ENCODE measurements at regions of chr17 and their contacts with region 1.

Region 1: DNA sequence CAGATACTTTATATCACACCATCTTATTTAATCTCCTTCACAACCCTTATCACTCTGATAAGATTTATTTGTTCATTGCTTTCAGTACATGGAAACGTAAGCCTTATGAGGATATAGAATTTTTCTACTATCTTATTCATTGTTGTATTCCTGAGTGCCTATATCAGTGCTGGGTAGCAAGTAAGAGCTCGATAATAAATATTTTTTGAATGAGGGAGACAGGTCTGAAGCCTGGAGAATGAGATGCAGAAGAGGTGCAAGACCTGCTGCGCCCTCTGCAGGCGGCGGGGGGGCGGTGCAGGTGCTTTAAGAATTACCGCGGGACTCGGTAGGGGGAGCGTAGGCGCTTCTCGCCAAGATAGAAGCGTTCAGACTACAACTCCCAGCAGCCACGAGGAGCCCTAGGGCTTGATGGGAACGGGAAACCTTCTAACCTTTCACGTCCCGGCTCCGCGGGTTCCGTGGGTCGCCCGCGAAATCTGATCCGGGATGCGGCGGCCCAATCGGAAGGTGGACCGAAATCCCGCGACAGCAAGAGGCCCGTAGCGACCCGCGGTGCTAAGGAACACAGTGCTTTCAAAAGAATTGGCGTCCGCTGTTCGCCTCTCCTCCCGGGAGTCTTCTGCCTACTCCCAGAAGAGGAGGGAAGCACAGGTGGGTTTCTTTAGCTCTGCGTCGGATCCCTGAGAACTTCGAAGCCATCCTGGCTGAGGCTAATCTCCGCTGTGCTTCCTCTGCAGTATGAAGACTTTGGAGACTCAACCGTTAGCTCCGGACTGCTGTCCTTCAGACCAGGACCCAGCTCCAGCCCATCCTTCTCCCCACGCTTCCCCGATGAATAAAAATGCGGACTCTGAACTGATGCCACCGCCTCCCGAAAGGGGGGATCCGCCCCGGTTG is at the start of gene WRAP53:
- DNase-seq: peak; percentile 91
- H3K4me3 Mint-ChIP-seq: peak within 1 kb of the TSS; percentile 86
- H3K27ac Mint-ChIP-seq: peak within 1 kb of the TSS; percentile 99
- H3K4me1 Mint-ChIP-seq: no peaks in the 10 kb centered on the region
- H3K27me3 Mint-ChIP-seq: no peaks in the 10 kb centered on the region
- CTCF ChIP-seq: peak; percentile 89
- total RNA-seq, gene WRAP53: 10.1 and 12.9 TPM in 2 replicates

Region 2: GRCh38 chr17:7351665-7352501 is 336.3 kb before region 1 on chr17 and contains the start of gene KCTD11:
- CTCF ChIA-PET with region 1: no interaction called
- intact Hi-C with region 1: loop called (anchors 10 kb)
- DNase-seq: peak; percentile 94
- H3K4me3 Mint-ChIP-seq: peak within 1 kb of the TSS; percentile 93
- H3K27ac Mint-ChIP-seq: peak within 1 kb of the TSS; percentile 95
- H3K4me1 Mint-ChIP-seq: peaks cover 28% of the 10 kb centered on the region
- H3K27me3 Mint-ChIP-seq: peaks cover 20% of the 10 kb centered on the region
- CTCF ChIP-seq: no peak
- total RNA-seq, gene KCTD11: 8.5 and 9.9 TPM in 2 replicates

Region 3: GRCh38 chr17:7484919-7485377 is 203.2 kb before region 1 on chr17:
- CTCF ChIA-PET with region 1: no interaction called
- intact Hi-C with region 1: loop called (anchors 5 kb)
- DNase-seq: no peak
- H3K4me3 Mint-ChIP-seq: peak overlapping the region; percentile 93
- H3K27ac Mint-ChIP-seq: peak overlapping the region; percentile 96
- H3K4me1 Mint-ChIP-seq: peaks cover 42% of the 10 kb centered on the region
- H3K27me3 Mint-ChIP-seq: no peaks in the 10 kb centered on the region
- CTCF ChIP-seq: no peak

Region 4: GRCh38 chr17:7583253-7584109 is 104.7 kb before region 1 on chr17 and contains the start of gene MPDU1:
- CTCF ChIA-PET with region 1: interaction called, 12 read pairs
- intact Hi-C with region 1: loop called (anchors 2 kb)
- DNase-seq: peak; percentile 90
- H3K4me3 Mint-ChIP-seq: peak within 1 kb of the TSS; percentile 84
- H3K27ac Mint-ChIP-seq: peak within 1 kb of the TSS; percentile 99
- H3K4me1 Mint-ChIP-seq: peaks cover 28% of the 10 kb centered on the region
- H3K27me3 Mint-ChIP-seq: no peaks in the 10 kb centered on the region
- CTCF ChIP-seq: no peak
- total RNA-seq, gene MPDU1: 34.6 and 36.3 TPM in 2 replicates

Region 5: GRCh38 chr17:7632492-7632894 is 55.7 kb before region 1 on chr17:
- CTCF ChIA-PET with region 1: interaction called, 4 read pairs
- intact Hi-C with region 1: loop called (anchors 5 kb)
- DNase-seq: peak; percentile 25
- H3K4me3 Mint-ChIP-seq: no peak overlapping the region
- H3K27ac Mint-ChIP-seq: no peak overlapping the region
- H3K4me1 Mint-ChIP-seq: no peaks in the 10 kb centered on the region
- H3K27me3 Mint-ChIP-seq: peaks cover 24% of the 10 kb centered on the region
- CTCF ChIP-seq: peak; percentile 43